GM12878 (cell line): ENCODE measurements at regions of chr4 and their contacts with region 1.

Region 1: DNA sequence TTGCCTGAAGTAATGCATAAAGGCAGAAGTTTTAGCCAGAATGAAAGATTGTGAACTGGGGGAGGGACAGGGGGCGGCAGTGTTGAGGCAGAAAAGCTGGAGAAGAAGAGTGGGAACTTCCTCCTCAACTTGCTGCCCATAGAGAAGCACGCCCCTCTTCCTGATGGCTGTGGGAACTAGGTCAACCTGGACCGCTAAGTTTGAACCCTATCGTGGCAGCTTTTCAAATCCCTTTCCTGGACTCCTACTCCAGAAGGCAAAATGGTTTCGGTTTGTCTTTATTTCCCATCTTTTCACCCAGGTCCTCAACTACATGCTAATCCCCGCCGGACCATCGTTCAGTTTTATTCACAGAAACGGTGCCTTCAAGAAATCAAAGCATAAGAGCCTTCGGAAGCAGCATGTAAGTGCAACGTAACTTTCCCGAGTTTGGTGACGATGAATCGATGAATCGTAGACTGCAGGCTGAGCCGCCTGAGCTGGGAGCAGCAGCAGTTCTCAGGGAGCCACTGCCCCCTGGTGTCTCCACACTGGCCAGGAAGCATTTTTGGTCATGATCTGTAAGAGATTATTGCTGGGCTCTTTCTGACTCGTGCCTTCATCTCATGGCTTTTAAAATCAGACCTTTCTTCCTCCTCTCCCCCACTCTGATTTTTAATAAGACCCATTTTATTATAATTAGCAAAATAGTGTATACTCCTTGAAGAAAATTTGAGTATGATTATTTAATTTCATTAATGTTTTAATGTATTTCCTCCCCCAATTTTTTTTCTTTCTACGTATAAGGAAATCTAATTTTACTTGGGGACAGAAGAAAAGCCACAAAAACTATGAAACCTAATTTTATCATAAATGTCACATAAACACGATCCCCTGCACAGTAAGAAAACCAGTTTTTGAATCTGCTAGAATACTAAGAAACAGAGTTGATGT is 21.4 kb downstream of the SPINK2 start:
- DNase-seq: peak; percentile 67
- ATAC-seq: peak; percentile 94
- H3K4me3 ChIP-seq: peak overlapping the region; percentile 80
- H3K27ac ChIP-seq: peak overlapping the region; percentile 14; the same call in 1 of the 2 replicates
- H3K4me1 ChIP-seq: no peaks in the 10 kb centered on the region
- H3K27me3 ChIP-seq: no peaks in the 10 kb centered on the region
- CTCF ChIP-seq: peak; percentile 88 to 98 (median 89)
- EP300 ChIP-seq: no peak
- POLR2A ChIP-seq: no peak
- RAD21 ChIP-seq: peak; percentile 98

Region 2: DNA sequence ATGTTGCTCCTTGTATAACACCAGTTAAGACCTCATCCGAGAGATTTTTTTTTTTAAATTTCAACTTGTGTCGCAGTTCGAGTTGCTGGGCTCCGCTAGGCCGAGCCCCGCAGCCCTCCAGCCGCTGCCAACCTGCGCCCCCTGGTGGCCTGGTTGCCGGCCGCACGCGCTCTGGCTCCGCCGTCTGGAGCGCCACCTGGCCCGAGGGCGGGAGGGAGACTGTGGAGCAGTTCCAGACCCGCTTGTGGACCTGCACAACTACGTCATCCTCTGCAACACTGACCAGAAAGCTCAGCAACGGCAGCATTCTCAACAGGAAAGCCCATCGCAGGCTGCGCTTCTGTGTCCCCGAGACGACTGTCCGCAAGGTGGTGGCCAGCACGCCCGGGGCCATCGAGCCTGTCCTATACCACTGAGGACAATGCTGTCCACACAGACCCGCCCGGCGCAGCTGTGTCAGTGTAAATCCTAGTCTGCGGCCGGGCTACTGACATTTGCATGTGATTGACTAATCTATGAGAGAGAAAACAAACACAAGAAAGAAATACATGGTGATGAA is 255.4 kb before region 1 on chr4:
- CTCF ChIA-PET with region 1: interaction called, 3 read pairs
- POLR2A ChIA-PET with region 1: no interaction called
- RAD21 ChIA-PET with region 1: no interaction called
- SMC1A ChIA-PET with region 1: no interaction called
- in situ Hi-C with region 1: no loop called
- intact Hi-C with region 1: loop called (anchors 2 kb)
- DNase-seq: peak; percentile 17
- ATAC-seq: peak; percentile 100
- H3K4me3 ChIP-seq: no peak overlapping the region
- H3K27ac ChIP-seq: no peak overlapping the region
- H3K4me1 ChIP-seq: no peaks in the 10 kb centered on the region
- H3K27me3 ChIP-seq: no peaks in the 10 kb centered on the region
- CTCF ChIP-seq: peak; percentile 94 to 99 (median 97); a peak in 5 of 6 replicates
- EP300 ChIP-seq: no peak
- POLR2A ChIP-seq: no peak
- RAD21 ChIP-seq: peak; percentile 78

Region 3: GRCh38 chr4:56575820-56576429 is 224.2 kb before region 1 on chr4:
- CTCF ChIA-PET with region 1: interaction called, 10 read pairs
- POLR2A ChIA-PET with region 1: no interaction called
- RAD21 ChIA-PET with region 1: interaction called, 3 read pairs
- SMC1A ChIA-PET with region 1: interaction called, 18 read pairs
- in situ Hi-C with region 1: no loop called
- intact Hi-C with region 1: loop called (anchors 5 kb)
- DNase-seq: no peak
- ATAC-seq: no peak
- H3K4me3 ChIP-seq: no peak overlapping the region
- H3K27ac ChIP-seq: no peak overlapping the region
- H3K4me1 ChIP-seq: no peaks in the 10 kb centered on the region
- H3K27me3 ChIP-seq: no peaks in the 10 kb centered on the region
- CTCF ChIP-seq: peak; percentile 18 to 31 (median 23); a peak in 3 of 6 replicates
- EP300 ChIP-seq: no peak
- POLR2A ChIP-seq: no peak
- RAD21 ChIP-seq: peak; percentile 59

Region 4: DNA sequence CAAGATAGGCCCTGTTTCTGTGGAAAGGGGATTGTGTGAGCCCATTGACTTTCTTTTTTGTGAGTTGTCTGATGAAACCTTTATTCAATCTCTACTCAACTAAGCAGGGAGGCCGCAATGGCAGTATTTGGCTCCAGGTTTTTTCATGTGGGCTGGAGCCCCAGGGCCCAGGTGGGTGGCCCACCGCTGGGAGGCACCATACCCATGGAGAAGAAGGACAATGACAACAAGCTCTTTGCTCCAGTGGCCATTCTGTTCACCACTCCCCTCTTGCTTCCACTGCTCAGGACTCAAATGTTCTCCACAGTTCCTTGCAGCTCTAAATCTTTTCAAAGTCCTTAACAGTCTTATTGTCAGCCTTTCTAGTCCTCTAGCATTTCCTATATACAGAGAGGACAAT is 173.1 kb before region 1 on chr4:
- CTCF ChIA-PET with region 1: interaction called, 11 read pairs
- POLR2A ChIA-PET with region 1: no interaction called
- RAD21 ChIA-PET with region 1: interaction called, 3 read pairs
- SMC1A ChIA-PET with region 1: interaction called, 7 read pairs
- in situ Hi-C with region 1: no loop called
- intact Hi-C with region 1: no loop called
- DNase-seq: no peak
- ATAC-seq: no peak
- H3K4me3 ChIP-seq: no peak overlapping the region
- H3K27ac ChIP-seq: no peak overlapping the region
- H3K4me1 ChIP-seq: no peaks in the 10 kb centered on the region
- H3K27me3 ChIP-seq: no peaks in the 10 kb centered on the region; a peak in 1 of 4 replicates
- CTCF ChIP-seq: peak in 2 of 3 experiments; percentile 15 to 17; a peak in 2 of 6 replicates
- EP300 ChIP-seq: no peak
- POLR2A ChIP-seq: no peak
- RAD21 ChIP-seq: peak; percentile 57

Region 5: DNA sequence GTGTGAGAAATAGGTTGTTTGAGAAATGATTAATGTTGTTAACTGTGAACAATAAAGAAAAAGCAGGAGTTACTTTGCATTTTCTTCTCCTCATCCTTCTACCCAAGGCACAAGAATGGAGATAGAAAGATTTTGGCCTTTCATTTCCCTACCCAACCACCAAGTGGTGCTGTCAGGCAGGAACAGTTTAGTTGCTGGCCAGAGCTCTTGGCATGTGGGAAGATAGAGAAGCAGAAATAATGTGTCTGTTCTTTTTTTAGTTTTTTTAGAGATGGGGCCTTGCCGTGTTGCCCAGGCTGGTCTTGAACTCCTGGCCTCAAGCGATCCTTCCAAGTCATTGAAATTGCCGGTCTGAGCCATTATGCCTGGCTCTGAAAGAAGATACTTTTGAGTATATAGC is 131.8 kb before region 1 on chr4:
- CTCF ChIA-PET with region 1: interaction called, 4 read pairs
- POLR2A ChIA-PET with region 1: no interaction called
- RAD21 ChIA-PET with region 1: no interaction called
- SMC1A ChIA-PET with region 1: interaction called, 3 read pairs
- in situ Hi-C with region 1: no loop called
- intact Hi-C with region 1: loop called (anchors 1 kb)
- DNase-seq: no peak
- ATAC-seq: no peak
- H3K4me3 ChIP-seq: no peak overlapping the region
- H3K27ac ChIP-seq: no peak overlapping the region
- H3K4me1 ChIP-seq: no peaks in the 10 kb centered on the region
- H3K27me3 ChIP-seq: no peaks in the 10 kb centered on the region; a peak in 1 of 4 replicates
- CTCF ChIP-seq: peak; percentile 27 to 33 (median 29); a peak in 3 of 6 replicates
- EP300 ChIP-seq: no peak
- POLR2A ChIP-seq: no peak
- RAD21 ChIP-seq: peak; percentile 69

Region 6: DNA sequence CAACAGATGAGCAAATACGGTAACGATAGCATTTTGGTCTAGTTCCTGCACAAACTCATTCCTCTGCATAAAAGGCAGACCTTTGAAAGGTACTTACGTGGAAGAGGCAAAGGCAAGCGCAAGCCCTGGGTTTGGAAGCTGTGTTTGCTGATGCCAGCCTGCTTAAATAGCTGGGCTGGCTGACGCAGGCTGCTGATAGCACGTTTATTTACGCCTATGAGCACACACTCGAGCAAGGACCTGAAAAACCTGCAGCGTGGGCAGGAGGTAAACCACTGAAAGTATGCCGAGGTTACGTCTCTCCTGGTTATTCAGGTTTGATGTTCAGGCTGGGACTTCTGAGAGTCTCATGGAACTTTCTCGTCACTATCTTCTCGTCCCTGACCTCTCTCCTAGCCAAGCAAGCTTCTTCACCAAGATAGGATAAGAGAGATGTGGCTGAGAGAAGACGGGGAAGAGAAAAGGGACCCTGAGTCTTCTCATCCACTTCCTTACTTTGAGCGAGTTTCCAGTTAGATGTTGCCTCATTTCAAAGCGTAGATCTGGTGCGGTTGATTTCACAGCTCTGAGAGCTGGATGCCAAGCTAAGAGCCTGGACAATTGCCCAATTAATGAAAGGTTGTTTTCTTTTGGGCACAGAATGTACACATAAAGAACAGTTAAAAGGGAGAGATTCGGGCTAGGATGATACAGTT is 118.8 kb before region 1 on chr4 and contains the start of gene HOPX:
- CTCF ChIA-PET with region 1: no interaction called
- POLR2A ChIA-PET with region 1: no interaction called
- RAD21 ChIA-PET with region 1: no interaction called
- SMC1A ChIA-PET with region 1: no interaction called
- in situ Hi-C with region 1: no loop called
- intact Hi-C with region 1: loop called (anchors 5 kb)
- DNase-seq: peak; percentile 13
- ATAC-seq: peak; percentile 73
- H3K4me3 ChIP-seq: no peak within 1 kb of the TSS
- H3K27ac ChIP-seq: no peak within 1 kb of the TSS
- H3K4me1 ChIP-seq: peaks cover 8% of the 10 kb centered on the region
- H3K27me3 ChIP-seq: peaks cover 0 to 6% of the 10 kb centered on the region in 2 experiments
- CTCF ChIP-seq: no peak
- EP300 ChIP-seq: no peak
- POLR2A ChIP-seq: no peak
- RAD21 ChIP-seq: no peak
- polyA plus RNA-seq, gene HOPX: 0.22 to 0.40 TPM

Region 7: GRCh38 chr4:56817840-56818491 is 17.9 kb after region 1 on chr4:
- CTCF ChIA-PET with region 1: interaction called, 4 read pairs
- POLR2A ChIA-PET with region 1: no interaction called
- RAD21 ChIA-PET with region 1: no interaction called
- SMC1A ChIA-PET with region 1: interaction called, 3 read pairs
- in situ Hi-C with region 1: no loop called
- intact Hi-C with region 1: loop called (anchors 1 kb)
- DNase-seq: peak; percentile 92
- ATAC-seq: peak; percentile 93
- H3K4me3 ChIP-seq: no peak overlapping the region
- H3K27ac ChIP-seq: no peak overlapping the region
- H3K4me1 ChIP-seq: peaks cover 23% of the 10 kb centered on the region
- H3K27me3 ChIP-seq: peaks cover 3 to 5% of the 10 kb centered on the region in 2 experiments; a peak in 3 of 4 replicates
- CTCF ChIP-seq: no peak
- EP300 ChIP-seq: peak; percentile 69 to 73; a peak in 3 of 4 replicates
- POLR2A ChIP-seq: no peak
- RAD21 ChIP-seq: no peak